Endothelial cell of umbilical vein (primary cell): ENCODE measurements at regions of chr14 and their contacts with region 1.

Region 1: DNA sequence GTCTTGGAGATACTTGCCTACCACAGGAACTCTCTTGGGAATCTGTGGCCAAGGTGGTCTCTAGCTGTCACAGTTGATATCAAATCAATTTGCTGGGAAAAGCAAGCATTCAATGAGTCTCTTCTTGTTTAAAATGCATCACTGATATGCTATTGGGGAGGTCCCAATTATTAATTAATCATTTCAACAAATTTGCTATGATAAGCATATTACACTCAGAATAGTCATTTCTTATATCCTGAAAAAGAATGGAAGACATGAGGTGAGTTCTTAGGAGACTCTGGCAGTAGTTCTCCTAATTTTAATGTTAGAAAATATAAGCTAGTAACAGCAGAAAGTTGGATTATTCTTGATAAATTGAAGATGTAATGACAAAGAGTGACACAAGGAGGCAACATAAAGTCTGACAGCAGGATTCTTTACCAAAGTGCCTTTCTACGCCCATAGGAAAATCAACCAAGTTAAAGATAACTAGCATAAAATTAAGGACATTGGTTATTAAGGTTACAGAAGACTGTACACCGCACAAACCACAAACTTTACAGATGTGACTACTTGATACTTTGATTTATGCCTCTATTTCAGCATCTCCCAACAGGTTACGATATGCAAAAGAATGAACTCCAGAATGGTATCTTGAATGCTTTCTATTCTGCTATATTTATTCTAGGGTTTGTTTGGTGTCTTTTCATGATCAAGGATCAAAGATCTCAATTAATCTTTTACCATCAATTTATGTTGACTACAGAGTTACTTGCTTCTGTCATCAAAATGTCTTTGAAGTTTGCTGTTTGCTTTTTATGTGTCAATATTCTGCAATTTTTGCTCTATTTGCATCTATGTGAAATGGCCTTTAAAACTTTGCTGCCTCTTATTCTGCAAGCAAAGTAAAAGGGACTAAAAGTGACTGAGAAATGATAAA is 349.6 kb upstream of the CLEC14A start:
- DNase-seq: peak; percentile 32
- H3K4me3 ChIP-seq: no peak overlapping the region
- H3K27ac ChIP-seq: no peak overlapping the region
- H3K4me1 ChIP-seq: no peaks in the 10 kb centered on the region
- H3K27me3 ChIP-seq: no peaks in the 10 kb centered on the region
- CTCF ChIP-seq: peak; percentile 7 to 22
- POLR2A ChIP-seq: no peak

Region 2: GRCh38 chr14:37903343-37904191 is 701.9 kb before region 1 on chr14:
- CTCF ChIA-PET with region 1: interaction called, 15 read pairs
- POLR2A ChIA-PET with region 1: no interaction called
- dilution Hi-C with region 1: no loop called
- intact Hi-C with region 1: loop called (anchors 1 kb)
- DNase-seq: peak; percentile 64
- H3K4me3 ChIP-seq: no peak overlapping the region
- H3K27ac ChIP-seq: no peak overlapping the region
- H3K4me1 ChIP-seq: peaks cover 3% of the 10 kb centered on the region
- H3K27me3 ChIP-seq: peaks cover 22 to 23% of the 10 kb centered on the region in 2 experiments
- CTCF ChIP-seq: peak; percentile 33 to 45
- POLR2A ChIP-seq: no peak

Region 3: DNA sequence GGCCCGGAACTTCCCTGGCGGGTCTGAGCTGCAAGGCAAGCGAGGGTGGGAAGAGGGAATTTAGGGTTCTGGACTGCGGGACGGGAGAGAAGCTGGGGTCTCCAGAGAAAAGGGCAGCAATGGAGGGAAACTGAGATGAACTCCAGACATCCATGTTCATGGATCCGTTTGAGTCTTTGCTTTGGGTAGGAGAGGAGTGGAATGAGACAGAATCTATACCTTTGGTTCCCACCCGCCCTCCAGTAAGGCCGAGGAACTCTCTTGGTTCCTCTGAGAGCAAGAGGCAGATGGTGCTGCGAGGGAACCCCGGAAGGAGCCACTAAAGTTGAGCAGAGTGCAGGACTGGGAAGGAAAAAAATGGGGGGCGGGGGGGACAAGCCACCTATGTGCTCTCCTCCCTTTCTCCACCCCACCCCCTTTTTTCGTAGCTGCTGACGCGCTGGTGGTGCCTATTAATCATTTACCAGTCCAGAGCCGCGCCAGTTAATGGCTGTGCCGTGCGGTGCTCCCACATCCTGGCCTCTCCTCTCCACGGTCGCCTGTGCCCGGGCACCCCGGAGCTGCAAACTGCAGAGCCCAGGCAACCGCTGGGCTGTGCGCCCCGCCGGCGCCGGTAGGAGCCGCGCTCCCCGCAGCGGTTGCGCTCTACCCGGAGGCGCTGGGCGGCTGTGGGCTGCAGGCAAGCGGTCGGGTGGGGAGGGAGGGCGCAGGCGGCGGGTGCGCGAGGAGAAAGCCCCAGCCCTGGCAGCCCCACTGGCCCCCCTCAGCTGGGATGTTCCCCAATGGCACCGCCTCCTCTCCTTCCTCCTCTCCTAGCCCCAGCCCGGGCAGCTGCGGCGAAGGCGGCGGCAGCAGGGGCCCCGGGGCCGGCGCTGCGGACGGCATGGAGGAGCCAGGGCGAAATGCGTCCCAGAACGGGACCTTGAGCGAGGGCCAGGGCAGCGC is 396.6 kb before region 1 on chr14:
- CTCF ChIA-PET with region 1: interaction called, 11 read pairs
- POLR2A ChIA-PET with region 1: no interaction called
- dilution Hi-C with region 1: no loop called
- intact Hi-C with region 1: loop called (anchors 1 kb)
- DNase-seq: peak; percentile 47
- H3K4me3 ChIP-seq: peak overlapping the region; percentile 34 to 58 (median 44)
- H3K27ac ChIP-seq: no peak overlapping the region
- H3K4me1 ChIP-seq: peaks cover 36% of the 10 kb centered on the region
- H3K27me3 ChIP-seq: no peaks in the 10 kb centered on the region
- CTCF ChIP-seq: peak in 1 of 2 donors; percentile 48
- POLR2A ChIP-seq: no peak

Region 4: DNA sequence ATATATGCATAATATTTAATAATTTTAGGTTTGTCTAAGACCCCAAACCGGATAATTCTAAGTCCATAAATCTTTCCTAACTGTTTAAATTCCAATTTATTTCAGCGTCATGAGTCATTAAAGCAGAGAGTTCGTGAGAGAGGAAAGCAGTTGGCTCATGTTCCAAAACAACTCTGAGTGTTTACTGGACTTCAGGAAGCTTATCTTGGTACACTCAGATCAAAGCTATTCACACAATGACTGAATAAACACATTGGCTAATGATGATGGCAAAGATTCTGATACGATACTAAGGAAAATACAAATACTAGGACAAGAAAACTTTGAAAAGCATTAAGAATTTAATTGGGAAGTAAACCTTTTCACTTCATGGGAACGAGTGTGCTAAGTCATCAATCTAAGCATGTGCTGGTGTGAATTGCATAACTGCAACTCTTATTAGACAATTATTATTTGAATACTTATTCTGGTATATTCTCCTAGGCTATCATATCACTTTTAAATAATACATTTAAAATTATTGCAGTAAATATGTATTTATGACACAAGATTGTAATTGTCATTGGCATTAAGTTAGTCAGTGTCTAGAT is 314.8 kb before region 1 on chr14:
- CTCF ChIA-PET with region 1: interaction called, 20 read pairs
- POLR2A ChIA-PET with region 1: no interaction called
- dilution Hi-C with region 1: no loop called
- intact Hi-C with region 1: loop called (anchors 1 kb)
- DNase-seq: peak; percentile 99
- H3K4me3 ChIP-seq: peak overlapping the region in 1 of 3 experiments; percentile 34
- H3K27ac ChIP-seq: peak overlapping the region; percentile 99
- H3K4me1 ChIP-seq: peaks cover 44% of the 10 kb centered on the region
- H3K27me3 ChIP-seq: no peaks in the 10 kb centered on the region
- CTCF ChIP-seq: no peak
- POLR2A ChIP-seq: peak; percentile 74

Region 5: GRCh38 chr14:38357557-38357956 is 247.9 kb before region 1 on chr14:
- CTCF ChIA-PET with region 1: interaction called, 10 read pairs
- POLR2A ChIA-PET with region 1: no interaction called
- dilution Hi-C with region 1: no loop called
- intact Hi-C with region 1: no loop called
- DNase-seq: peak; percentile 97
- H3K4me3 ChIP-seq: peak overlapping the region in 1 of 3 experiments; percentile 19
- H3K27ac ChIP-seq: peak overlapping the region; percentile 76
- H3K4me1 ChIP-seq: peaks cover 36% of the 10 kb centered on the region
- H3K27me3 ChIP-seq: no peaks in the 10 kb centered on the region
- CTCF ChIP-seq: no peak
- POLR2A ChIP-seq: peak; percentile 78

Region 6: GRCh38 chr14:38592764-38593442 is 12.6 kb before region 1 on chr14:
- CTCF ChIA-PET with region 1: interaction called, 16 read pairs
- POLR2A ChIA-PET with region 1: no interaction called
- dilution Hi-C with region 1: no loop called
- intact Hi-C with region 1: no loop called
- DNase-seq: no peak
- H3K4me3 ChIP-seq: no peak overlapping the region
- H3K27ac ChIP-seq: no peak overlapping the region
- H3K4me1 ChIP-seq: no peaks in the 10 kb centered on the region
- H3K27me3 ChIP-seq: no peaks in the 10 kb centered on the region
- CTCF ChIP-seq: no peak
- POLR2A ChIP-seq: no peak

Region 7: DNA sequence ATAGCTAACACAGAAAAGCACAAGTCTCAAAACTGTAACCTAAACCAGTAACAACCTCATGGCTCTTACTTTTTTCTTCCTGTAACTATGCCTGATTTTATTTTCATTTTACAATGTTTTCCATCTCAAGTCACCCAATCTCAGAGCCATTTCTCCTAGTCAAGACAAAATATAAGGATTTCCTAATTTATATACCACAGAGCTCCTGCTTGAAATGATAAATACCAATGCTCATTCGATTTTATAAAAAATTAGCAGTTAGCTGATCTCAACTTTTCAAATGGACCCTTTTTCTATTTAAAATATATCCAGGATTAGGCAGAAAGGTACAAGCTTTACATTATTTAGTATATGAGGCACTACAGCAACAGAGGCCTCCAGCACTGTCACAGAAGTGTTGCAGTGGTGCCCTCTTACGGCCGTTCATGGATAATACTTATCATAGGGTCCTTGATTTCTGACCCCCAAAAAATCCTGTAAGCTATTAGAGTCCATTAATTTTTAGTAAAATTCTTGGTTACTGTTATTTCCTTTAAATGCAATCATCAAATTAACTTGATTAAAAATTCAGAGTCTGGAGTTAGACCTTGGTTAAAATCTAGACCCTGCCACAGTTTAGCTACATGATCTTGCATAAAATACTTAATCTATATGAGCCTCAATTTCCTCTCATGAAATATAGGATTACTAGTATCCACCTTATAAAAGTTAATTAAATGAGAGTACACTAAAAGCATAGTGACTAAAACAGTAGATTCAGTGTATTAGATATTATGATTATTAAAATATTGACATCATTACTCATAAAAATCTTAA is 429.2 kb after region 1 on chr14:
- CTCF ChIA-PET with region 1: interaction called, 22 read pairs
- POLR2A ChIA-PET with region 1: no interaction called
- dilution Hi-C with region 1: no loop called
- intact Hi-C with region 1: no loop called
- DNase-seq: peak; percentile 53
- H3K4me3 ChIP-seq: no peak overlapping the region
- H3K27ac ChIP-seq: no peak overlapping the region
- H3K4me1 ChIP-seq: no peaks in the 10 kb centered on the region
- H3K27me3 ChIP-seq: no peaks in the 10 kb centered on the region
- CTCF ChIP-seq: peak; percentile 36 to 41
- POLR2A ChIP-seq: no peak